ENCODE measurements at regions of chr1 and their contacts with region 1.

Region 1: DNA sequence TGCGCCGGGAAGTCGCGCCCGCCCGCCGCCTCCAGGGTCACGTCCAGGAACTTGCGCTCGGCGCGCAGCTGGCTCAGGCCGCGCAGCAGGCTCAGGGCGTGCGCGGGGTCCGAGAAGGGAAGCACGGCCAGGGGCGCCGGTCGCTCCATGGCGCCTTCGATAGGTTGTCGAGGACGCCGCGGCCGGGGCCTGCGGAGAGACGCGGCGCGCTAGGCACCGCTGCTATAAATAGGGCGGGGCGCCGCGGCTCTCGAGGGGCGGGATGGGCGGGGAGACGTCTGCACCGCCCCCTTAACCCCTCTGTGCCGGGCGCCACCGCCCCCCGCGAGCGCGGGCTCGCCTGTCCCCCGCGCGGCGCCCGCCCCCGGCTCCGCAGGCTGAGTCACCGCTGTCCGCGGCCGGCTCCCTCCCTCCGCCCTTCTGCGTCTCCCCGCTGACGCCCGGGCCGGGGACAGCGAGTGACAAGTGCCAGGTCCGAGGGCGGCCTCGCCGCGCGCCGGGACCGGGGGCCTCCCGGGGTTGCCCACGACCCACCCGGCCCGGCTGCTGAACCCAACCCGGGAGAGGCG is at the start of gene KLHL21:
- DNase-seq: peak; percentile 75
- H3K4me3 Mint-ChIP-seq: peak within 1 kb of the TSS; percentile 90
- H3K27ac Mint-ChIP-seq: peak within 1 kb of the TSS; percentile 96
- H3K4me1 Mint-ChIP-seq: peaks cover 28% of the 10 kb centered on the region
- H3K27me3 Mint-ChIP-seq: peaks cover 2% of the 10 kb centered on the region
- total RNA-seq, gene KLHL21: 27.8 and 28.1 TPM in 2 replicates

Region 2: DNA sequence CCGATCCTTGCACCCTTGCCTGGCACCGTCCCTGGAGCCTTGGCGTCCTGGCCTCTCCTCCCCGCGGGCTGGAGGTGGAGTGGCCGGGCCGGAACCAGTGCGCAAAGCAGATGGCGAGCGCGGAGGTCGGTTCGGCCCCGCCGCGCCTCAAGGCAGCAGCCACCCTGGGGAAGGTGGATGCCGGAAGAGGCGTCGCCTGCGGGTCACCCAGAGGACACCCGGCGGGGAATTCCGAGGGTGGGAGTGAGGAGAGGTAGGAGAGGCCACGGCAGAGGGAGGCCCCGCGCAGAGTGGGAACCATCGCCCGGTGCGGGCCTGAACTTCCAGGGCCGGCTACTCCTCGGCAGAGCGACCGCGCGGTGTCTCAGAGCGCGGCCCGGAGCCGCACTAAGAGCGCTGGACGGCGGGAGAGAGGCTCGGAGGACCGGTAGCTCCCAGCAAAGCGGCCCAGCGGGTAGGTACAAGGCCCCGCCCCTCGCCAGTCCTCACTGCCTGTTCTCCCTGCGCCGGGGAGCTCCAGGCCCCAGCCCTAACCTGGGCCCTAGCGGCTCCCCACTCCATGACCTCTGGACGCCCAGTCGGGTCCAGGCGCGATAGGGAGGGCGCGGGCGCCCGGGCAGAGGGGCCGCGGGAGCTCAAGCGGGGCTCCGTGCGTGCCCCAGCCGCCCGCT is 396.8 kb before region 1 on chr1 and contains the start of gene RNF207:
- intact Hi-C with region 1: loop called (anchors 2 kb)
- DNase-seq: peak; percentile 76
- H3K4me3 Mint-ChIP-seq: peak within 1 kb of the TSS; percentile 85
- H3K27ac Mint-ChIP-seq: peak within 1 kb of the TSS; percentile 68
- H3K4me1 Mint-ChIP-seq: peaks cover 15% of the 10 kb centered on the region
- H3K27me3 Mint-ChIP-seq: peaks cover 3% of the 10 kb centered on the region
- total RNA-seq, gene RNF207: 65.8 and 71.6 TPM in 2 replicates

Region 3: DNA sequence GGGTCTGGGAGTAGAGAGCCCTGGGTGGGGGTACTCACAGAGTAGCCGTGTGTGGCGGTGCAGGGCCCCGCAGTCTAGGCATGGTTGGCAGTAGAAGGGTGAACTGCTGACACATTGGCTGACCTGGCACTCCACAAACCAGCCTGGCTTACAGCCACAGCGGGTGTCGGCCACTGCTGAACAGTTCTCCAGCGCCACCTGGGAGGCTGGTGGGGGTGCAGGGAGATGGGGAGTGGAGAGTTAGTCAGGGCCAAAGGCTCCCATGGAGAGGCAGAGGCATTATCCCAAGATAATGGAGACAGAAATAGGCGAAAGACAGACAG is 138.3 kb before region 1 on chr1:
- intact Hi-C with region 1: loop called (anchors 1 kb)
- DNase-seq: no peak
- H3K4me3 Mint-ChIP-seq: peak overlapping the region; percentile 99
- H3K27ac Mint-ChIP-seq: peak overlapping the region; percentile 91
- H3K4me1 Mint-ChIP-seq: peaks cover 41% of the 10 kb centered on the region
- H3K27me3 Mint-ChIP-seq: no peaks in the 10 kb centered on the region

Region 4: DNA sequence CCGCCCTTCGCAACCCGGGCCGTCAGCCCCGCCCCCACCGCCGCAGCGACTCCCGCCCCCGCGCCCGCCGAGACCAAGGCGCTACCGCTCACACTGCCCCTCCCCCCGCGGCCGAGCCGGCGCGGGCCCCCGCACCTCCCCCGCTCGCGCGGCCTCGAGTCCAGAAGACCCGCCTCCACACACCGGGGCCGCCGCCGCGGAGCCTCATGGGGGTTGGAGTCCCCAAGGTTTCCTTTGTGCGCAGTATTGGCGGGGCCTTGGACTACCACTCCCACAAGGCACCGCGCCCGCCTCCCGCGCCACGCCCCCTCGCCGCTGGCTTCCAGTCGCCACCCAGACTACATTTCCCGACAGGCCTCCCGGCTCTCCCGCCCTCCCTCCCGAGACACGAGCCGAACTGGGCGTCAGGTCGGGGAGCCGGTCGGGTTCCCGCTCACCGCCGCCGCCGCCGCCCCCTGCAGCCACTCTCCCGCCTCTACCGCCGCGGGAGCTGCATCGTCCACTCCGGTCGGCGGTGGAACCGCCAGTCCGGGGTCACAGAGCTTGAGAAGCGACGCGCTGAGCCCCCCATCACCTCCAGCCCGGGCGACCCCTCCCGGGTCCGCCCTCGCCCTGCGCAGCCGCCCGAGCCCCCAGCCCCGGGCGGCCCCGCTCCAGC is 10.7 kb after region 1 on chr1 and contains the start of gene PHF13:
- intact Hi-C with region 1: loop called (anchors 1 kb)
- DNase-seq: peak; percentile 99
- H3K4me3 Mint-ChIP-seq: peak within 1 kb of the TSS; percentile 85
- H3K27ac Mint-ChIP-seq: peak within 1 kb of the TSS; percentile 82
- H3K4me1 Mint-ChIP-seq: peaks cover 24% of the 10 kb centered on the region
- H3K27me3 Mint-ChIP-seq: peaks cover 4% of the 10 kb centered on the region
- total RNA-seq, gene PHF13: 18.8 and 19.5 TPM in 2 replicates

Region 5: DNA sequence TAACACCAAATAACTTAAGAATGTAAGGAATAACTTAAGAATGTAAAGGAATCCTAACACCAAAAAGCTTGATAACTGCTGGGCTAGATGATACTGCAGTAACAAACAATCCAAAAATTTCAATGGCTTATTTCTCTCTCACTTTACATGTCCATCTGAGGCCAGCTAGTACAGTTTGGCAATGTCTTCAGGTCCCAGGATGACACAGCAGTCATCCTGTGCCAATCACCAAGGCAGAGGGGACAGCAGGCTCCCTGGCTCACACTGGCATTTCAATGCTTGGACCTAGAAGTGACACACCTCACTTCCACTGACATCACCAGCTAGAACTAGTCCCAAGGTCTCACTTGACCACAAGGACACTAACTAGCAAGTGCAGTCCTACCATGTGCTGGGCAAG is 83.5 kb after region 1 on chr1:
- intact Hi-C with region 1: no loop called
- DNase-seq: no peak
- H3K4me3 Mint-ChIP-seq: no peak overlapping the region
- H3K27ac Mint-ChIP-seq: no peak overlapping the region
- H3K4me1 Mint-ChIP-seq: peaks cover 9% of the 10 kb centered on the region
- H3K27me3 Mint-ChIP-seq: no peaks in the 10 kb centered on the region

Region 6: GRCh38 chr1:6701437-6702153 is 98.8 kb after region 1 on chr1 and contains the start of gene DNAJC11:
- intact Hi-C with region 1: loop called (anchors 2 kb)
- DNase-seq: peak; percentile 92
- H3K4me3 Mint-ChIP-seq: peak within 1 kb of the TSS; percentile 92
- H3K27ac Mint-ChIP-seq: peak within 1 kb of the TSS; percentile 96
- H3K4me1 Mint-ChIP-seq: peaks cover 27% of the 10 kb centered on the region
- H3K27me3 Mint-ChIP-seq: no peaks in the 10 kb centered on the region
- total RNA-seq, gene DNAJC11: 81.4 and 84.4 TPM in 2 replicates

Measured in activated T-helper 1 cell treated with anti-CD3 and anti-CD28 coated beads, Interleukin-12 subunit alpha, Interleukin-12 subunit beta, Interleukin-2, Interleukin-4 antibody, amounts not matched to agents 30 ng/mL and 10 ng/mL and 1 ng/mL, durations not matched to agents 14 hours and 24 hours and 36 hours (primary cell).